Naive thymus-derived CD4-positive, alpha-beta T cell (primary cell): ENCODE measurements at regions of chr4 and their contacts with region 1.

Region 1: DNA sequence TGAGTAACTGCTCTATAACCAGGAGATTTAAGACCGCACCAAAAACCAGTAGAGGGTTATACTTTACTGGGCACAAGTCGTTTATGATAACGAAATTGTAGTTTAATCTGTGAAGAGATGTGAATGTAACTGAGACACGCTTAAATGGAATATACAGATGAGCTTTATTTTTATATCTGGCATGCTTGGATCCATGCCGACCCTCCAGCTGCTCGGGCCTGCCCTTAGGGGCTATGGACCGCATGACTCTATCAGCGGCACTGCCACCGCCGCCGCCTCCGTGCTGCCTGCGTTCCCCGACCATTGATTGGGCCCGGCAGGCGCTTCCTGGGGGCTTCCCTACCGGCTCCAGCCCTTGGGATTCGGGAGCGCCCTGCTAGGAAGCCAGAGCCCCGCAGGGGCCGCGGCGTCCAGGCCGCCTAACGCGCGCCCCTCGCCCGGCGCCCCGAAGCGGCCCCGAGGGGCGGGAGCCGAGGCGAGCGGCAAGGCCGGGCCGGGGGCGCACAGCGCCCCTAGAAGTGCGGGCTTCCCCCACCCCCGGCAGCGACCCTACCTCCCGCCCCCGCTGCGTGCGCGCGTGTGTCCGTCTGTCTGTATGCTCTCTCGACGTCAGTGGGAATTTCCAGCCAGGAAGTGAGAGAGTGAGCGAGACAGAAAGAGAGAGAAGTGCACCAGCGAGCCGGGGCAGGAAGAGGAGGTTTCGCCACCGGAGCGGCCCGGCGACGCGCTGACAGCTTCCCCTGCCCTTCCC is at the start of gene NFKB1:
- DNase-seq: peak; percentile 64 to 95 (median 79)
- ATAC-seq: peak; percentile 85
- H3K4me3 ChIP-seq: peak within 1 kb of the TSS; percentile 96
- H3K4me3 Mint-ChIP-seq: peak within 1 kb of the TSS; percentile 93 to 98 (median 97)
- H3K27ac ChIP-seq: peak within 1 kb of the TSS; percentile 100
- H3K27ac Mint-ChIP-seq: peak within 1 kb of the TSS; percentile 95 to 99 (median 96)
- H3K4me1 ChIP-seq: peaks cover 6 to 22% of the 10 kb centered on the region in 2 donors
- H3K4me1 Mint-ChIP-seq: peaks cover 16 to 35% (median 31%) of the 10 kb centered on the region in 7 donors
- H3K27me3 ChIP-seq: no peaks in the 10 kb centered on the region
- H3K27me3 Mint-ChIP-seq: no peaks in the 10 kb centered on the region
- total RNA-seq, gene NFKB1: 80.9 to 167 (median 136) TPM

Region 2: GRCh38 chr4:101020956-101021355 is 1479.9 kb before region 1 on chr4:
- CTCF ChIA-PET with region 1: no interaction called
- POLR2A ChIA-PET with region 1: no interaction called
- intact Hi-C with region 1: loop called in 1 of 2 experiments (anchors 5 kb)
- DNase-seq: peak in 3 of 9 donors; percentile 3 to 10 (median 10)
- ATAC-seq: peak; percentile 82
- H3K4me3 ChIP-seq: peak overlapping the region; percentile 21
- H3K4me3 Mint-ChIP-seq: peak overlapping the region in 4 of 10 donors; percentile 3 to 76 (median 46)
- H3K27ac ChIP-seq: no peak overlapping the region
- H3K27ac Mint-ChIP-seq: peak overlapping the region; percentile 8 to 90 (median 59)
- H3K4me1 ChIP-seq: peaks cover 0 to 48% of the 10 kb centered on the region in 2 donors
- H3K4me1 Mint-ChIP-seq: peaks cover 21 to 55% (median 34%) of the 10 kb centered on the region in 7 donors
- H3K27me3 ChIP-seq: no peaks in the 10 kb centered on the region
- H3K27me3 Mint-ChIP-seq: no peaks in the 10 kb centered on the region

Region 3: GRCh38 chr4:102196221-102196620 is 304.6 kb before region 1 on chr4:
- CTCF ChIA-PET with region 1: no interaction called
- POLR2A ChIA-PET with region 1: no interaction called
- intact Hi-C with region 1: no loop called
- DNase-seq: no peak
- ATAC-seq: no peak
- H3K4me3 ChIP-seq: no peak overlapping the region
- H3K4me3 Mint-ChIP-seq: no peak overlapping the region
- H3K27ac ChIP-seq: no peak overlapping the region
- H3K27ac Mint-ChIP-seq: no peak overlapping the region
- H3K4me1 ChIP-seq: peaks cover 0 to 6% of the 10 kb centered on the region in 2 donors
- H3K4me1 Mint-ChIP-seq: peaks cover 2 to 38% (median 26%) of the 10 kb centered on the region in 7 donors
- H3K27me3 ChIP-seq: peaks cover 0 to 3% of the 10 kb centered on the region in 2 donors
- H3K27me3 Mint-ChIP-seq: no peaks in the 10 kb centered on the region

Region 4: DNA sequence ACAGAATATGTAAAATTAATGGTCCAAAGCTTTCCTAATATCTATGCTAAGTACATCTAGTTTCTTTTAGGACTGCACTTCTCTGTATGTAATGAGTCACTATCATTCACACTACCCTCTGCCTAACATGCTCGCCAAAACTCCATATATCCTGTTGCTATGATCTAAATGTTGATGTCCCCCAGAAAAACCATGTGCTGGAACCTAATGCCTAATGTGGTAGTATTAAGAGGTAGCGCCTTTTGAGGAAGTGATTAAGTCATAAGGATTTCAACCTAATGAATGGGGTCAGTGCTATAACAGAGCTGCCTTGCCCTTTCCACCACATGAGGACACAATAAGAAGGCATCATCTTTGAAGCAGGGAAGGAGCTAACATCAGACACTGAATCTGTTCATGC is 34.6 kb before region 1 on chr4:
- CTCF ChIA-PET with region 1: interaction called, 3 read pairs
- POLR2A ChIA-PET with region 1: interaction called, 4 read pairs
- intact Hi-C with region 1: loop called in 1 of 2 experiments (anchors 2 kb)
- DNase-seq: no peak
- ATAC-seq: peak; percentile 34
- H3K4me3 ChIP-seq: no peak overlapping the region
- H3K4me3 Mint-ChIP-seq: peak overlapping the region in 1 of 10 donors; percentile 3
- H3K27ac ChIP-seq: no peak overlapping the region
- H3K27ac Mint-ChIP-seq: peak overlapping the region in 2 of 9 donors; percentile 10 to 48
- H3K4me1 ChIP-seq: peaks cover 0 to 18% of the 10 kb centered on the region in 2 donors
- H3K4me1 Mint-ChIP-seq: peaks cover 15 to 59% (median 38%) of the 10 kb centered on the region in 7 donors
- H3K27me3 ChIP-seq: no peaks in the 10 kb centered on the region
- H3K27me3 Mint-ChIP-seq: no peaks in the 10 kb centered on the region

Region 5: GRCh38 chr4:102554482-102554881 is 53.6 kb after region 1 on chr4:
- CTCF ChIA-PET with region 1: interaction called, 6 read pairs
- POLR2A ChIA-PET with region 1: no interaction called
- intact Hi-C with region 1: loop called in 1 of 2 experiments (anchors 10 kb)
- DNase-seq: no peak
- ATAC-seq: no peak
- H3K4me3 ChIP-seq: no peak overlapping the region
- H3K4me3 Mint-ChIP-seq: no peak overlapping the region
- H3K27ac ChIP-seq: no peak overlapping the region
- H3K27ac Mint-ChIP-seq: peak overlapping the region in 2 of 9 donors; percentile 10 to 84
- H3K4me1 ChIP-seq: peaks cover 14 to 32% of the 10 kb centered on the region in 2 donors
- H3K4me1 Mint-ChIP-seq: peaks cover 38 to 54% (median 47%) of the 10 kb centered on the region in 7 donors
- H3K27me3 ChIP-seq: no peaks in the 10 kb centered on the region
- H3K27me3 Mint-ChIP-seq: no peaks in the 10 kb centered on the region

Region 6: DNA sequence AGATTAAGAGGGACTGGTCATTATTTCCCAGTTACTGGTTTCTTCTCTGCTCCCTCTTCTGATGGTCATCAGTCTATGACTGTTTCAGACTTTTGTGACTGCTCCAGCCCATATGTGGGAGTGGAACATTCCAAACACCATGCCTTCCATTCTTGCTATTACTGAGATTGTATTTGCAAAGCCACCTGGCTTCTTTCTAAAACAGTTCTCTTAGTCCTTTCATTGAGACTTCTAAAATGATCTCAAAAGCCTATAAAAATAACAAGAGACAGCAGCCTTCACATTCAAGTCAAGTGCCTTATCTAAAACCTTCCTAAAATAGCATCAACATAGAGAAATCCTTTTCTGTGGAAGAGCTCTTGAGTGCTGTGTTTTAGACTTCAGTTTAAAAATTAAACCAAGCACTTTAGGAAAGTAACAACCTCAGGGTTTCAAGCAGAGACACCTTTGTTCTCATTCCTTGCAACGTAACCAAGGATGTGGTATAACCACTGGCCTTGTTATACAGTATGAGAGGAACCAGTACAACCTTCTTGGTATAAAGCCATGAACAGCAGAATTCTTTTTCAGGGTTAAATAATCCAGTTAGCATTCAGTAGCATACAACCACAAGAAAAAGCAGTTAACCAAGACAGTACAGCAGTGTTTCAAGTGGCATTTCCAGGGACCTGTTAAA is 97.4 kb after region 1 on chr4:
- CTCF ChIA-PET with region 1: no interaction called
- POLR2A ChIA-PET with region 1: interaction called, 6 read pairs
- intact Hi-C with region 1: loop called (anchors 1 to 5 kb)
- DNase-seq: peak in 7 of 9 donors; percentile 56 to 87 (median 79)
- ATAC-seq: peak; percentile 95
- H3K4me3 ChIP-seq: no peak overlapping the region
- H3K4me3 Mint-ChIP-seq: peak overlapping the region; percentile 8 to 86 (median 54)
- H3K27ac ChIP-seq: peak overlapping the region; percentile 51
- H3K27ac Mint-ChIP-seq: peak overlapping the region; percentile 78 to 94 (median 86)
- H3K4me1 ChIP-seq: peaks cover 27 to 45% of the 10 kb centered on the region in 2 donors
- H3K4me1 Mint-ChIP-seq: peaks cover 31 to 86% (median 74%) of the 10 kb centered on the region in 7 donors
- H3K27me3 ChIP-seq: no peaks in the 10 kb centered on the region
- H3K27me3 Mint-ChIP-seq: no peaks in the 10 kb centered on the region

Region 7: GRCh38 chr4:102760645-102761295 is 259.9 kb after region 1 on chr4 and contains the start of gene MANBA:
- CTCF ChIA-PET with region 1: no interaction called
- POLR2A ChIA-PET with region 1: interaction called, 3 read pairs
- intact Hi-C with region 1: loop called in 1 of 2 experiments (anchors 1 kb)
- DNase-seq: peak; percentile 62 to 81 (median 73)
- ATAC-seq: peak; percentile 91
- H3K4me3 ChIP-seq: peak within 1 kb of the TSS; percentile 62
- H3K4me3 Mint-ChIP-seq: peak within 1 kb of the TSS; percentile 86 to 99 (median 98)
- H3K27ac ChIP-seq: peak within 1 kb of the TSS; percentile 72
- H3K27ac Mint-ChIP-seq: peak within 1 kb of the TSS; percentile 56 to 92 (median 84)
- H3K4me1 ChIP-seq: peaks cover 4 to 16% of the 10 kb centered on the region in 2 donors
- H3K4me1 Mint-ChIP-seq: peaks cover 35 to 50% (median 42%) of the 10 kb centered on the region in 7 donors
- H3K27me3 ChIP-seq: no peaks in the 10 kb centered on the region
- H3K27me3 Mint-ChIP-seq: peaks cover 0 to 13% (median 0%) of the 10 kb centered on the region in 5 donors
- total RNA-seq, gene MANBA: 15.7 to 56.4 (median 29.7) TPM

Region 8: DNA sequence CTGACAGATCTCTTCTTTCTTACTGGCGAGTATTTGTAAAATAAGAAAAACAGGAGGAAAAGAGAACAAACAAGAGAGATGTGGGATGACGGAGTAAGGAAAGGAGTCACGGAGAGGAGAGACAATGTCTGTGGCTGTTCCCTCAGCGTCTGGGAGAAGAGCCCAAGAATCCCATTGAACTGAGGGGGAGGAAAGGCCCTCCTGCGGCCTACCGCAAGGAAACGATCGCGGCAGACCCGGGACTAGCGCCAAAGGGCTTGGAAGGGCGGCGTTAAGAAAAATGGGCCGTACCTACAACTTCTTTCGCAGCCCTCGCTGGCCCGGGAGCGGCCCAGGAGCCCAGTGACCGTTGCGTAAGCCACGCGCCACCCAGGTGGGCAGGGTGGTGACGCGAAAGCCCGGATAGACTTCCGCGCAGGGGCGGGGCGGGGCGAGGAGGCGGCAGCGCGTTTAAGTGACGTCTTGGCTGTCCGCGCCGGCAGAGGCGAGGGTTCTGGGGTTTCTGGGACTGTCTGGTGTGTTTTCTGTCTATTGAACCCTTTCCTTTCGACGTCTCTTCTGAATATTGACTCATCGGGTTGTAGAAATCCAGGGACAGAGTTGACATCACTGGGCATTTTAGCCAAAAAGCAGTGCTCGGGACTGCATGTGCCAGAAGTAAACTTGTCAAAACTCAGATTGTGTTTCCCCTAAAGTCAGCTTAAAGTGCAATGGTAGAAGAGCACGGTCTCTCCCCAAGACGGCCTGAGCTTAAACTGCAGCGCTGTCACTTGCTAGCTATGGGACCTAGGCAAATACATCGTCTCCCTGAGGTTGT is 518.6 kb after region 1 on chr4 and contains the start of gene SLC9B1:
- CTCF ChIA-PET with region 1: no interaction called
- POLR2A ChIA-PET with region 1: no interaction called
- intact Hi-C with region 1: loop called (anchors 1 to 2 kb)
- DNase-seq: peak; percentile 87 to 95 (median 92)
- ATAC-seq: peak; percentile 98
- H3K4me3 ChIP-seq: peak within 1 kb of the TSS; percentile 48
- H3K4me3 Mint-ChIP-seq: peak within 1 kb of the TSS; percentile 84 to 98 (median 93)
- H3K27ac ChIP-seq: peak within 1 kb of the TSS; percentile 80
- H3K27ac Mint-ChIP-seq: peak within 1 kb of the TSS in 6 of 9 donors; percentile 96 to 99 (median 98)
- H3K4me1 ChIP-seq: peaks cover 13 to 14% of the 10 kb centered on the region in 2 donors
- H3K4me1 Mint-ChIP-seq: peaks cover 0 to 29% (median 20%) of the 10 kb centered on the region in 7 donors
- H3K27me3 ChIP-seq: no peaks in the 10 kb centered on the region
- H3K27me3 Mint-ChIP-seq: no peaks in the 10 kb centered on the region
- total RNA-seq, gene SLC9B1: 1.4 to 7.2 (median 3.9) TPM